ENCODE measurements at regions of chr3 and their contacts with region 1.

Region 1: DNA sequence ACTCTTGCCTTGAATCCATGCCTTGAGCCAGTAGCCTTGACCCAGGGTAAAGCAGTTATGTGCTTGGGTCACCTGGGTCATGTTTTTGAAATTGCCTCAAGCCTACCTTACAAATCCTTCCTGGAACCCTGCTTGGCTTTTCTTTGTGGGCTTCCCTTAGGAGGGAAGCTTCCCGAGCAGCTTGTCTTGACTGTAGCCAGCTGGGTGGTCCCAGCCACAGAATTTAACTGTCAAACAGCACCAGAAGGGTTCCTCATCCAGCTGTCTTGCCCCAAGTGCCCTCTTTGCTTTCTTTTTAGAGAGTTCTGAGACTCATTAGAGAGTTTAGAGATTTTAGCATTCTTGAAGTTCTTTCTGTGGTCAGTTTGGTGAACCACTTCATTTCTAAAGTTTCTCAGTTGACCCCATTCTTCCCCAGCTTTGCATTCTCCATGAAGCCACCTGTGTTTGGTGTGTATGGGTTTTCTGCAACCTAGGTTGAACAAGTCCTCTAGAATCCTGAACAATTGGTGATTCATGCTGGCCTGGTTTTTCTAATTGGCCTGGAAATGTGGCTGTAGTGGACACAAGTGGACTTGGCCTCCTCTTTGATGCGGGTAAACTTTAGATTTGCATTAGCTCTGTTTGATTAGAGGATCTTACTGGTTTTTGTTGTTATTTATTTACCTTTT is 33.6 kb downstream of the FLNB start:
- DNase-seq: no peak
- ATAC-seq: no peak
- H3K4me3 ChIP-seq: no peak overlapping the region
- H3K4me3 Mint-ChIP-seq: peak overlapping the region in 1 of 3 donors; percentile 7
- H3K27ac ChIP-seq: no peak overlapping the region
- H3K27ac Mint-ChIP-seq: peak overlapping the region in 1 of 2 donors; percentile 25
- H3K4me1 ChIP-seq: peaks cover 8 to 25% of the 10 kb centered on the region in 2 experiments
- H3K4me1 Mint-ChIP-seq: peaks cover 51 to 73% (median 63%) of the 10 kb centered on the region in 3 donors
- H3K27me3 ChIP-seq: no peaks in the 10 kb centered on the region
- H3K27me3 Mint-ChIP-seq: no peaks in the 10 kb centered on the region

Region 2: DNA sequence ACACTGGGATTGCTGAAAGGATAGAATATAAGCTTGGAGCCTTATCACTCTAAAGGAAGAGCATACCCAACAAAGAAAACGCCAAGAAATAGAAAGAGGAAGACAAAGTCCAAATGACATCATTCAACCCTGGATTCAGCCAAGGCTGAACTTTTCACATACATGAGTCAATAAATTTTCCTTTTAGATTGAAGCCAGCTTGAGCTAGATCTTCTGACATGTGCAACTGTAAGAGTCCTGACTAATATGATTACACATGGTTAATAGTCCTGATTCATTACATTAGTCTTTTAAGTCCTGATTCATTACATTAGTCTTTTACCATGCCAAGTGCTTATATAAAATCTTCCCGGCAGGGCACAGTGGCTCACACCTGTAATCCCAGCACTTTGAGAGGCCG is 335.3 kb before region 1 on chr3:
- CTCF ChIA-PET with region 1: no interaction called
- POLR2A ChIA-PET with region 1: no interaction called
- DNase-seq: no peak
- ATAC-seq: no peak
- H3K4me3 ChIP-seq: no peak overlapping the region
- H3K4me3 Mint-ChIP-seq: no peak overlapping the region
- H3K27ac ChIP-seq: no peak overlapping the region
- H3K27ac Mint-ChIP-seq: no peak overlapping the region
- H3K4me1 ChIP-seq: no peaks in the 10 kb centered on the region
- H3K4me1 Mint-ChIP-seq: peaks cover 0 to 5% (median 3%) of the 10 kb centered on the region in 3 donors
- H3K27me3 ChIP-seq: no peaks in the 10 kb centered on the region
- H3K27me3 Mint-ChIP-seq: peaks cover 0 to 4% of the 10 kb centered on the region in 2 donors

Region 3: GRCh38 chr3:58059349-58060321 is 17.8 kb after region 1 on chr3:
- CTCF ChIA-PET with region 1: no interaction called
- POLR2A ChIA-PET with region 1: interaction called in 1 of 2 experiments, 12 read pairs
- DNase-seq: no peak
- ATAC-seq: no peak
- H3K4me3 ChIP-seq: no peak overlapping the region
- H3K4me3 Mint-ChIP-seq: no peak overlapping the region
- H3K27ac ChIP-seq: no peak overlapping the region
- H3K27ac Mint-ChIP-seq: peak overlapping the region in 1 of 2 donors; percentile 5
- H3K4me1 ChIP-seq: peaks cover 0 to 7% of the 10 kb centered on the region in 2 experiments
- H3K4me1 Mint-ChIP-seq: peaks cover 21 to 45% (median 26%) of the 10 kb centered on the region in 3 donors
- H3K27me3 ChIP-seq: no peaks in the 10 kb centered on the region
- H3K27me3 Mint-ChIP-seq: no peaks in the 10 kb centered on the region

Region 4: GRCh38 chr3:58072052-58072762 is 30.4 kb after region 1 on chr3:
- CTCF ChIA-PET with region 1: no interaction called
- POLR2A ChIA-PET with region 1: no interaction called
- DNase-seq: no peak
- ATAC-seq: no peak
- H3K4me3 ChIP-seq: no peak overlapping the region
- H3K4me3 Mint-ChIP-seq: no peak overlapping the region
- H3K27ac ChIP-seq: no peak overlapping the region
- H3K27ac Mint-ChIP-seq: no peak overlapping the region
- H3K4me1 ChIP-seq: peaks cover 16 to 21% of the 10 kb centered on the region in 2 experiments
- H3K4me1 Mint-ChIP-seq: peaks cover 38 to 39% (median 39%) of the 10 kb centered on the region in 3 donors
- H3K27me3 ChIP-seq: no peaks in the 10 kb centered on the region
- H3K27me3 Mint-ChIP-seq: no peaks in the 10 kb centered on the region

Region 5: DNA sequence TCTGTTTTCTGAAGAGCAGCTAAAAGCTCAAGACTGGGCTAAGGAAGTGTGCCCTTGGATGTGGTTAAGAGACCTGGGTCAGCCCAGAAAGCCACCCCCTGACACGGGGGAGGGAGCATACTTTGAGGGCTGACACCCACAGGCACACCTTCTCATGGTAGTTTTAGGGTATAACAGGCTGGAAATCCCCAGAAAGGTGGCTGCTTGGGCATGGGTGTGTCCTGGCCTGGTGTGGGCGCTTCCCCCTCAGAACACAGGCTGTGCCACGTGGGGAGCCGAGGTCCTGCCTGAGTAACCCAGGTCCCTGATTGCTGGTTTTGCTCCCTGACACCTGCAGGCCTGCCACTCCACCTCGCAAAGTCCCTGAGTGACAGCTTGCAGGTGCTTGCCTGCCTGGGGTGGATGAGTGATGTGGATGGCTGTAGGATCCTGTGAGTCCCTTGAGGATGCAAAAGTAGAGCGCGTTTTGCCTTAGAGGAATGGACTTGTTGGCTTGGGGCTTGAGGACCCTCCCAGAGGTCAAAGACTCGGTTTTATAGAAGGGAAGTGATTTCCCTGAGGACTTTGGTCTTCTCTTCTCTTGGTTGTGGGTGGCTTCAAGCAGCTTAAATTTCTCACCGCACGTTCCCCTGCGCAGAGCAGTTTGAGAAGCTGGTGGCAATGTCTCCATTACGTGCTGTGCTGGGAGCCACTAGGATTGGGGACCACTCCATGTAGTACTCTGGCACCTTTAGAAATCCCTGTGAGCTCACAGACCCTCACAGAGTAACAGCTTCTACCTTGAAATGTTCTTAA is 74.6 kb after region 1 on chr3:
- CTCF ChIA-PET with region 1: no interaction called
- POLR2A ChIA-PET with region 1: no interaction called
- DNase-seq: peak; percentile 22 to 90 (median 71)
- ATAC-seq: peak; percentile 79 to 94 (median 92)
- H3K4me3 ChIP-seq: no peak overlapping the region
- H3K4me3 Mint-ChIP-seq: peak overlapping the region in 2 of 3 donors; percentile 8 to 57
- H3K27ac ChIP-seq: peak overlapping the region; percentile 63
- H3K27ac Mint-ChIP-seq: peak overlapping the region; percentile 79 to 88
- H3K4me1 ChIP-seq: peaks cover 20 to 35% of the 10 kb centered on the region in 2 experiments
- H3K4me1 Mint-ChIP-seq: peaks cover 39 to 45% (median 40%) of the 10 kb centered on the region in 3 donors
- H3K27me3 ChIP-seq: no peaks in the 10 kb centered on the region
- H3K27me3 Mint-ChIP-seq: no peaks in the 10 kb centered on the region

Region 6: GRCh38 chr3:58288011-58288728 is 246.4 kb after region 1 on chr3:
- CTCF ChIA-PET with region 1: no interaction called
- POLR2A ChIA-PET with region 1: no interaction called
- DNase-seq: no peak
- ATAC-seq: no peak
- H3K4me3 ChIP-seq: no peak overlapping the region
- H3K4me3 Mint-ChIP-seq: no peak overlapping the region
- H3K27ac ChIP-seq: no peak overlapping the region
- H3K27ac Mint-ChIP-seq: no peak overlapping the region
- H3K4me1 ChIP-seq: no peaks in the 10 kb centered on the region
- H3K4me1 Mint-ChIP-seq: no peaks in the 10 kb centered on the region
- H3K27me3 ChIP-seq: no peaks in the 10 kb centered on the region
- H3K27me3 Mint-ChIP-seq: no peaks in the 10 kb centered on the region